ENCODE measurements at regions of chr12 and their contacts with region 1.

Region 1: DNA sequence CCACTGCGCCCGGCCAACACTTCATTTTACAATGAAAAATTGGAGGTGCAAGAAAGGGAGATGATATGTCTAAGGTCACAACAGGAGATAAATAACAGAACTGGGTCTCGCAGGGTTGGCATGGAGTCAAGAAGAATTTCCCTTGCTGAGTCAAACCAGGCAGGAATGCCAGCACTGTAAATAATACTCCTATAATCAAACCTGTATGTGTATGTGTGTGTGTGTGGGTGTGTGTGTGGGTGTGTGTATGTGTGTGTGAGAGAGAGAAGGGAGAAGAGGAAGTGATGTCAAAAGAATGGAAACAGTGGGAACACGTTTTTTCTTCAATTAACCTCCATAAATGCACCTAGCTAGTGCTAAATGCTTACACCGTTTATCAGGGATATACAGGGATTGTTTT is 70.4 kb downstream of the TMEM116 start:
- DNase-seq: no peak
- H3K4me3 Mint-ChIP-seq: no peak overlapping the region
- H3K27ac Mint-ChIP-seq: no peak overlapping the region
- H3K4me1 Mint-ChIP-seq: peaks cover 12% of the 10 kb centered on the region
- H3K27me3 Mint-ChIP-seq: no peaks in the 10 kb centered on the region

Region 2: GRCh38 chr12:111819191-111820150 is 123.1 kb before region 1 on chr12:
- CTCF ChIA-PET with region 1: no interaction called
- intact Hi-C with region 1: no loop called
- DNase-seq: no peak
- H3K4me3 Mint-ChIP-seq: no peak overlapping the region
- H3K27ac Mint-ChIP-seq: no peak overlapping the region
- H3K4me1 Mint-ChIP-seq: no peaks in the 10 kb centered on the region
- H3K27me3 Mint-ChIP-seq: peaks cover 9% of the 10 kb centered on the region

Region 3: GRCh38 chr12:111881716-111882115 is 60.8 kb before region 1 on chr12:
- CTCF ChIA-PET with region 1: no interaction called
- intact Hi-C with region 1: no loop called
- DNase-seq: no peak
- H3K4me3 Mint-ChIP-seq: no peak overlapping the region
- H3K27ac Mint-ChIP-seq: no peak overlapping the region
- H3K4me1 Mint-ChIP-seq: no peaks in the 10 kb centered on the region
- H3K27me3 Mint-ChIP-seq: no peaks in the 10 kb centered on the region

Region 4: GRCh38 chr12:111993292-111994150 is 51.0 kb after region 1 on chr12:
- CTCF ChIA-PET with region 1: interaction called, 5 read pairs
- intact Hi-C with region 1: loop called (anchors 5 kb)
- DNase-seq: peak; percentile 42
- H3K4me3 Mint-ChIP-seq: peak overlapping the region; percentile 72
- H3K27ac Mint-ChIP-seq: peak overlapping the region; percentile 31
- H3K4me1 Mint-ChIP-seq: peaks cover 60% of the 10 kb centered on the region
- H3K27me3 Mint-ChIP-seq: no peaks in the 10 kb centered on the region

Region 5: DNA sequence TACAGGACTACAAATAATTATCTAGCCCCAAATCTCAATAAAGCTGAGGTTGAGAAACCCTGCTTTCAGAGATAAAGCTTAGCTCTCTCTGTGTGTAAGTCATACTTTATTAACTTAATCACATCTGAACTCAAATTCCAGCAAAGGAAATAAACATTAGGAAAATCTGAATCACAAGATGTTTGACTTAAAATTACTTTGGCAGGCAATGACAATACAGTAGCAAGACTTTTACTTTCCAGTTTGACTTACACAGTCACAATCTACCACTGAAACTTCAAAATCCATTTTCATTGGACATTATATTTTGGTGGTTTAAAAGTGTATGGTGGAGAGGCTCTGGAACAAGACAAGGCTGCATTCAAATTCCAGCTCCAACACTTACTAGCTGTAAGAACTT is 59.0 kb after region 1 on chr12:
- CTCF ChIA-PET with region 1: interaction called, 10 read pairs
- intact Hi-C with region 1: no loop called
- DNase-seq: no peak
- H3K4me3 Mint-ChIP-seq: peak overlapping the region; percentile 40
- H3K27ac Mint-ChIP-seq: peak overlapping the region; percentile 80
- H3K4me1 Mint-ChIP-seq: peaks cover 64% of the 10 kb centered on the region
- H3K27me3 Mint-ChIP-seq: no peaks in the 10 kb centered on the region

Region 6: DNA sequence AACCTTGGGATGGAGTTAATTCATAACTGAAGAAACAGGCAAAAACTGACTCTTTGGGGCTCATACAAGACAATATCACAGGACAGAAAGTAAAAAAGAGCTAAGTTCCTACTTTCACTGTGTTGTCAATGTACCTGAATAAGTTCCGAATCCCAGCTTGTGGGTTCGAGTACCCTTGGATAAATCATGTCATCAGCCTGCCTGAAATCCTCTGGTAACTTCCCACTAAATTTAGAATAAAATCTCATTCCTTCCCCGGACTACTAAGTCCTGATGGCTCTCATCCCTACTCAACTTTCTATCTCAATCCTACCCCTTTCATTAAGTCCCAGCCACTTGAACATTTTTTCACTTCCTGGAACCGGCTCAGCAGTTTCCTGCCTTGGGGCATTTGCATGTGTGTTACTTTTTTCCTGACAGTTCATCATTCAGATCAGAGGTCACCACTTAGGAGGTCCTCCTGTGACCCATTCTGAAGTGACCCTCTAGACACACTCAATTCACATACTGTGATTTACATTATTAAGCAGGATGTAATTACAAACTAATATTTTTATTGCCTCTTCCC is 83.3 kb after region 1 on chr12:
- CTCF ChIA-PET with region 1: interaction called, 8 read pairs
- intact Hi-C with region 1: loop called (anchors 5 kb)
- DNase-seq: no peak
- H3K4me3 Mint-ChIP-seq: no peak overlapping the region
- H3K27ac Mint-ChIP-seq: peak overlapping the region; percentile 79
- H3K4me1 Mint-ChIP-seq: peaks cover 34% of the 10 kb centered on the region
- H3K27me3 Mint-ChIP-seq: no peaks in the 10 kb centered on the region

Region 7: GRCh38 chr12:112170376-112170775 is 227.8 kb after region 1 on chr12:
- CTCF ChIA-PET with region 1: interaction called, 4 read pairs
- intact Hi-C with region 1: loop called (anchors 1 kb)
- DNase-seq: peak; percentile 62
- H3K4me3 Mint-ChIP-seq: no peak overlapping the region
- H3K27ac Mint-ChIP-seq: no peak overlapping the region
- H3K4me1 Mint-ChIP-seq: no peaks in the 10 kb centered on the region
- H3K27me3 Mint-ChIP-seq: no peaks in the 10 kb centered on the region